ENCODE measurements at regions of chr3 and their contacts with region 1.

Region 1: DNA sequence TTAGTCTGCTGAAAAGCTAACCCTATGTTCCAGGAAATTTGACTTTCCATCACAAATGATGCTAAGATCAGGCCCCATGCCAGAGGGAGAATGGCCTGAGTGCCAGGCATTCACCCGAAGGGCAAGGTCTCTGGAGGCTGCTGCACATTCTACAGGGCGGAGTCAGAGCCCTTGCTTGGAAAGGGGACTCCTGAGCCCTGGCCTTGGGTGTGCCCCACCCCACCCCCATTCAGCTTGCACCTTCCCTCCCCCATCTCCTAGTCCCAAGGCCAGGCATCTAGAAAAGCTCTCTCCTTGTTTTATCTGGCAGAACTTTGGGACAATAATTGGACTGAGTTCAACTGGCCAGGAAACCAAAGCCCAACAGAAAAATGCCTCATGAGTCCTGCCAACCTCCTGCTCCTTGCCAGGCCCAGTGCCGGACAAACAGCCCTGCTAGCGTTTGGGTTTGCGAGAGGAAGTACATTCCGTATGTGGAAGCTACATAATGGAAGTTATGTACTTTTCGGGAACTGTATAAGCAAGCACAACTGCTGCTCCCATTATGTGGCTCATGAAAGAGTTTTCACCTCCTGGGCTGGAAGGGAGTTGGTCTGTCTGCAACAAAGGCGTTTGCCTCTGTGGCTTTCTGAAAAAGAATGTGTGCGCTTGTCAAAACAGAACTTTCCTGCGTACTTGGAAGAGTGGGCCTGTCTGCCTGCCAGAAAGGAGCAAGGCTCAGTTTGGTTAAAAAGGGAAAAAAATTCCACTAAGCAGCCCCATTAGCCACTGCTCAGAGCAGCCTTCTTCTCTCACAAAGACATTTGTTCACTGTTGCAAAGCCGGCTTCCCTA is 321.5 kb upstream of the CTNNB1 start:
- DNase-seq: peak; percentile 24 to 95
- H3K4me3 ChIP-seq: peak overlapping the region in 1 of 2 donors; percentile 34
- H3K27ac ChIP-seq: peak overlapping the region; percentile 49 to 82
- H3K4me1 ChIP-seq: peaks cover 0 to 20% of the 10 kb centered on the region in 2 donors
- H3K27me3 ChIP-seq: no peaks in the 10 kb centered on the region
- CTCF ChIP-seq: no peak

Region 2: DNA sequence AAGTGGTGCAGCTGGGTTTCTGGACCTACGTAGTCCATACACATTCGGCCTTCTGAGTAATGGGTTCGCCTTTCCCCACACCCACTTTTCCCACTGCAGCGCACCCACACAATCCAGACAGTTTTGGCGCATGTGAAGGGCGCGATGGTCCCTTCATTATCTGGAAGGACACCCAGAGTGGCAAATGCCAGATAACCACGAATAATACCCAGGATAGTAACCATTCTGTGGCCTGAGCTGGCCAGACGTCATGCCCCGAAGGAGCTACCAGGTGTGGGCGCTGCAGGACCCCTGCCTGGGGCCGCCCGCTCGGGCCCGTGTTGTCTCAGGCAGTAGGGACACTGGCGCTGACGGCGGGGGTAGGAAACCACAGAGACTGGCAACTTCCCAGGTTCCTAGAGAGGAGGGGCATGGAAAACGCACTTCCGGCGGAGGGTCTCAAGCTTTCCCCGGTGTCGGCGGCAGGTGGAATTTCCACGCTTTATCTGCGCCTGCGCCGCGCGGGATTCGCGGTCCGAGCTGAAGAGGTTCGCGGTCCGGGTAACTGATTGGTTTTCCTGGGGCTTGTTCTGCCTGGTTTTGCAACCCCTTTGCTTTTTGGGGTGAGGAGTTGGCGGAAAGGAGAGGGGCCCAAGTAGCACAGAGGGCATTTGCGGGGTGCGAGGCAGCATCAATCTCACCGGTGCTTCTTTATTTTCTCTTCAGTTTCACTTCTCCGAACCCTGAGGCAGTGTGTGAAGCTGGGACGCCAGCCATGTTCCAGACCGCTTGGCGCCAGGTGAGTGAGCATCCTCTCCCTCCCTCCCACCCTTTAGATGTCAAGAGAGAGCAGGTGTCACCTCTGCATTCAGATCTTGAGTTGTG is 372.0 kb before region 1 on chr3 and contains the start of gene ZNF620:
- intact Hi-C with region 1: loop called (anchors 10 kb)
- DNase-seq: peak; percentile 12 to 90
- H3K4me3 ChIP-seq: peak within 1 kb of the TSS; percentile 52 to 69
- H3K27ac ChIP-seq: peak within 1 kb of the TSS; percentile 77 to 82
- H3K4me1 ChIP-seq: peaks cover 5 to 10% of the 10 kb centered on the region in 2 donors
- H3K27me3 ChIP-seq: no peaks in the 10 kb centered on the region
- CTCF ChIP-seq: peak in 2 of 3 experiments; percentile 18 to 40
- total RNA-seq, gene ZNF620: not detected

Region 3: DNA sequence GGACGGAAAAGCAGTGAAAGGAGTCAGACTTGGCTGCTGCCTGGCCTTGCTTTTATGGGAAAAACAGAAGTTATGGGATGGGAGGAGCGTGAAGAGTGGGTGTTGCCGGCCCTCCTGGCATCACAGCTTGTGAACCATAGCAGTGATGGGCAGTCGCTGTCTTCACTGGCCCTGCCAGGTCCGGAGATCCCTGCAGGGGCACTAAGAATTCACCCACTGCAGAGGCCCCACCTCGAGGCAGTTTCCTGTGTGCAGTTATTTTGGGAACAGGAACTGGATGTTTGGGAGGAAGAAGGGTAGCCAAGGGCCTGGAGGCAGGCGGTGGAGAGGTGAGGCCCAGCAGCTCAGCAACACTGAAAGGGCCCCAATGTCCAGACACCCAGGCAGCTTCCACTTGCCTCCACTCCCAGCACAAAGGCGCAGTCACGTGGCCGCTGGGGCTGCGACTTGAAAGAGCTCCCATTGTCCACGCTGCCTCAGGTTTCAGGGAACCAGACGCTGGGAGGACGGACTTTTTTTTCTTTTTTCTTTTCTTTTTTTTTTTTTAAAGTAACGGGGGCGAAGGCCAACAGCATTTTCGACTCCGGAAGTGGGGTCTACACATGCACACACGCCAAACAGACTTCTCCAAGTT is 97.4 kb before region 1 on chr3:
- intact Hi-C with region 1: loop called (anchors 2 kb)
- DNase-seq: peak in 1 of 2 donors; percentile 88
- H3K4me3 ChIP-seq: peak overlapping the region; percentile 16 to 57
- H3K27ac ChIP-seq: peak overlapping the region; percentile 83 to 84
- H3K4me1 ChIP-seq: peaks cover 11 to 17% of the 10 kb centered on the region in 2 donors
- H3K27me3 ChIP-seq: no peaks in the 10 kb centered on the region
- CTCF ChIP-seq: no peak

Region 4: GRCh38 chr3:40837300-40837699 is 40.5 kb before region 1 on chr3:
- intact Hi-C with region 1: no loop called
- DNase-seq: no peak
- H3K4me3 ChIP-seq: no peak overlapping the region
- H3K27ac ChIP-seq: no peak overlapping the region
- H3K4me1 ChIP-seq: no peaks in the 10 kb centered on the region
- H3K27me3 ChIP-seq: no peaks in the 10 kb centered on the region
- CTCF ChIP-seq: no peak

Region 5: DNA sequence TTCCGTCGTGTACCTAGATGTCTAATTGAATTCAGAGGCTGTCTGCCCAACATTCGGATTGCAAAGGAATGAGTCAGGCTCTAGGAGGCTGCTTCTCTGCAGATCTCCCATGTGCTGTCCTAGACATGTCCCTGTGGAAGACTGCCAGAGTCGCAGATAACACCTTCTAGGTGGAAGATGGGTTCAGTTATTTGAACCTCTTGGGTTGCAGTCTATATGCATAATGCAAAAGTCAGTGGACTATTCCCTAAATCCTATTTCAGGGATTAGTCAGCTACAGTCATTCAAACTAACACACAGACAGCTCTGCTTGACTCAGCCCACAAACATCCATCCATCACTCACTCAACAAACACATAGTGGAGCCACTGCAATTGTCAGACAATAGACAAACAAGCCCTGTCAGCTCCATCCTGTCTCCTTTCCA is 21.5 kb after region 1 on chr3:
- intact Hi-C with region 1: no loop called
- DNase-seq: no peak
- H3K4me3 ChIP-seq: no peak overlapping the region
- H3K27ac ChIP-seq: no peak overlapping the region
- H3K4me1 ChIP-seq: no peaks in the 10 kb centered on the region
- H3K27me3 ChIP-seq: no peaks in the 10 kb centered on the region
- CTCF ChIP-seq: no peak

Region 6: GRCh38 chr3:40989147-40990066 is 111.6 kb after region 1 on chr3:
- intact Hi-C with region 1: no loop called
- DNase-seq: peak in 1 of 2 donors; percentile 58
- H3K4me3 ChIP-seq: no peak overlapping the region
- H3K27ac ChIP-seq: no peak overlapping the region
- H3K4me1 ChIP-seq: no peaks in the 10 kb centered on the region
- H3K27me3 ChIP-seq: no peaks in the 10 kb centered on the region
- CTCF ChIP-seq: no peak

Region 7: DNA sequence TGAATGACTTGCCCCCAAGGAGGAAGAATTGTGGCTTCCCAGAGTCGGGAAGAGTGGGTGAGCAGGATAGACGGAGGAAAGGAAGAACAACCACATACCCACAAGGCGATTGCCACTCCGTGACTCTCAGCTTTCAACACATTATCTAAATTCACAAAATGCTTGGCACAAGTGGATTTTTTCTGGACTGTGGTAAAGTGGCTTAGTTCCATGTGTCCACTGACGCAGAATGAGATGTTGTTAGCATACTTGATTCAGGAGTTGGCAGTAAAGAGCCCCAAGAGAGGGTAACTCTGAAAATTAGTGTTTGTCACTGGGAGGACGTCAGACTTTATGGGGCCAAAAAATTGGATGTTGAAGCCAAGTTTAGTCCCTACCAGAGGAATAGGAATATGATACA is 122.6 kb after region 1 on chr3:
- intact Hi-C with region 1: loop called (anchors 1 kb)
- DNase-seq: peak in 1 of 2 donors; percentile 83
- H3K4me3 ChIP-seq: no peak overlapping the region
- H3K27ac ChIP-seq: peak overlapping the region; percentile 58 to 62
- H3K4me1 ChIP-seq: peaks cover 0 to 22% of the 10 kb centered on the region in 2 donors
- H3K27me3 ChIP-seq: no peaks in the 10 kb centered on the region
- CTCF ChIP-seq: no peak

Region 8: GRCh38 chr3:41224120-41224806 is 346.4 kb after region 1 on chr3:
- intact Hi-C with region 1: loop called (anchors 5 kb)
- DNase-seq: peak in 1 of 2 donors; percentile 78
- H3K4me3 ChIP-seq: no peak overlapping the region
- H3K27ac ChIP-seq: peak overlapping the region; percentile 50 to 80
- H3K4me1 ChIP-seq: peaks cover 0 to 53% of the 10 kb centered on the region in 2 donors
- H3K27me3 ChIP-seq: no peaks in the 10 kb centered on the region
- CTCF ChIP-seq: peak in 1 of 3 experiments; percentile 13